CD8-positive, alpha-beta T cell (primary cell): ENCODE measurements at regions of chr3 and their contacts with region 1.

Region 1: DNA sequence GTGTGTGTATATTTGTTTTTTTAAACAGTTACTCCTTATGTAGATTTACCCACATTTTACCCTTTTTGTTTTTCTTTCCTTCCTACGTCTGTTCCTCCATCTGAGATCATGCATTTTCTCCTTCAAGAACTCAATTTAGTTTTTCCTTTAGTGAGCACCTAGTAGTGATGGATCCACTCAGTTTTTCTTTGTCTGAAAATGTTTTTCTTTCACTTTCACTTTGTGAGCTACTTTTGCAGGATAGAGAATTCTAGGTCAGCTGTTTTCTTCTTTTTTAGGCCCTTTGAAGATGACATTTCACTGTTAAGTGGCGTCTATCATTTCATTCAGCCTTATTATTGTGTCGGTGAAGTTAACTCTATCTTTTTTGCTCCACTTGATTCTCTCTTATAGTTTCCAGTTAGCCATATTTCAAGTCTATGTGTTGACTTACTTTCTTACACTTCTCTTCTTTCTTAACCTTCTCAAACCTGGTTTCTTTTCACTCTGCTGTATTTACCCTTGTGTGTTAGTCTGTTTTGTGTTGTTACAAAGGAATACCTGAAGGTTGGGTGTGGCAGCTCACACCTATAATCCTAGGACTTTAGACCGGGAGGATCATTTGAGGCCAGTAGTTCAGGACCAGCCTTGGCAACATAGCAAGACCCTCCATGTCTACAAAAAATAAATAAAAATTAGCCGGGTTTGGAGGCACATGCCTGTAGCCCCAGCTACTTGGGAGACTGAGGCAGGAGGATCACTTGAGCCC is 55.8 kb downstream of the PRKCI start:
- DNase-seq: peak in 2 of 9 experiments; percentile 23 to 41
- ATAC-seq: peak; percentile 37
- H3K4me3 ChIP-seq: peak overlapping the region; percentile 26 to 27
- H3K4me3 Mint-ChIP-seq: peak overlapping the region; percentile 81
- H3K27ac ChIP-seq: peak overlapping the region; percentile 12 to 49
- H3K27ac Mint-ChIP-seq: peak overlapping the region; percentile 76
- H3K4me1 ChIP-seq: peaks cover 6% of the 10 kb centered on the region
- H3K4me1 Mint-ChIP-seq: peaks cover 20% of the 10 kb centered on the region
- H3K27me3 ChIP-seq: no peaks in the 10 kb centered on the region
- H3K27me3 Mint-ChIP-seq: no peaks in the 10 kb centered on the region
- CTCF ChIP-seq: no peak

Region 2: DNA sequence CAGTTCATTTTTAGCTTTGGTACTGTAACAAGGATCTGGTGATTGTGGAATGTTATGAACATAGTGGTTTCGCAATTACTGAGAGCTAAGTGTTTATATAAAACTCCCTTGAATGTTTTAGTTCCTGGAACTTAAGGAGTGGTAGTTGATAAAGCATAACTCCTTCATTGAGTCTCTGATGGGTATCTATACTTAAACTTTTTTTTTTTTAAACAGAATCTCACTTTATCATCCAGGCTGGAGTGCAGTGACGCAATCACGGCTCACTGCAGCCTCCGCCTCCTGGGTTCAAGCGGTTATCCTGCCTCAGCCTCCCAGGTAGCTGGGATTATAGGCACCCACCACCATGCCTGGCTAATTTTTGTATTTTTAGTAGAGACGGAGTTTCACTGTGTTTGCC is 44.5 kb before region 1 on chr3:
- CTCF ChIA-PET with region 1: no interaction called
- POLR2A ChIA-PET with region 1: no interaction called
- intact Hi-C with region 1: loop called in 1 of 2 experiments (anchors 5 kb)
- DNase-seq: no peak
- ATAC-seq: no peak
- H3K4me3 ChIP-seq: no peak overlapping the region
- H3K4me3 Mint-ChIP-seq: no peak overlapping the region
- H3K27ac ChIP-seq: no peak overlapping the region
- H3K27ac Mint-ChIP-seq: no peak overlapping the region
- H3K4me1 ChIP-seq: no peaks in the 10 kb centered on the region
- H3K4me1 Mint-ChIP-seq: peaks cover 6% of the 10 kb centered on the region
- H3K27me3 ChIP-seq: no peaks in the 10 kb centered on the region
- H3K27me3 Mint-ChIP-seq: no peaks in the 10 kb centered on the region
- CTCF ChIP-seq: no peak

Region 3: DNA sequence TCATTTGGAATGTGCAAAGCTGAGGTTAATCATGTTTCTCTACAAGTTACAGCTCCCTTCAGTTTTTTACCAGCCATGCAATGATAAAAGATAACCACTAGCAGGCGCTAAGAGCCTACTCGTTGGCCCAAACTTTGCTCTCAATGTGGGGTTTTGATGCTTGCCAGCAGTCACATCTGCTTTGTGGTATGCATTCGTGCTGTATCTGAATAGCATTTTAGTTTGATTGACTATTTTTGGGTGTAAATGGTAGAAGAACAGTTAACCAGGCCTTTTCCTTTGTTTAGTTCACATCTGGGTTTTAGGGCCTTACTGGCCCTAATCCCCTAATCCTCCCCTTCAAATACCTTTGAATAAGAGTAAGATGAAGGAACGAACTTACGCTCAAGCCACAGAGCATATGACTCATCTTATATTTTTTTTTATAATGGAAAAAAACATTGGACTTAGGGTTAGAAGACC is 136.2 kb after region 1 on chr3:
- CTCF ChIA-PET with region 1: no interaction called
- POLR2A ChIA-PET with region 1: no interaction called
- intact Hi-C with region 1: no loop called
- DNase-seq: peak in 6 of 9 experiments; percentile 6 to 64 (median 36)
- ATAC-seq: peak; percentile 75
- H3K4me3 ChIP-seq: no peak overlapping the region
- H3K4me3 Mint-ChIP-seq: no peak overlapping the region
- H3K27ac ChIP-seq: no peak overlapping the region
- H3K27ac Mint-ChIP-seq: no peak overlapping the region
- H3K4me1 ChIP-seq: peaks cover 7% of the 10 kb centered on the region
- H3K4me1 Mint-ChIP-seq: peaks cover 8% of the 10 kb centered on the region
- H3K27me3 ChIP-seq: peaks cover 5 to 8% of the 10 kb centered on the region in 2 experiments
- H3K27me3 Mint-ChIP-seq: peaks cover 23% of the 10 kb centered on the region
- CTCF ChIP-seq: peak; percentile 97